ENCODE measurements at regions of chr15 and their contacts with region 1.

Region 1: DNA sequence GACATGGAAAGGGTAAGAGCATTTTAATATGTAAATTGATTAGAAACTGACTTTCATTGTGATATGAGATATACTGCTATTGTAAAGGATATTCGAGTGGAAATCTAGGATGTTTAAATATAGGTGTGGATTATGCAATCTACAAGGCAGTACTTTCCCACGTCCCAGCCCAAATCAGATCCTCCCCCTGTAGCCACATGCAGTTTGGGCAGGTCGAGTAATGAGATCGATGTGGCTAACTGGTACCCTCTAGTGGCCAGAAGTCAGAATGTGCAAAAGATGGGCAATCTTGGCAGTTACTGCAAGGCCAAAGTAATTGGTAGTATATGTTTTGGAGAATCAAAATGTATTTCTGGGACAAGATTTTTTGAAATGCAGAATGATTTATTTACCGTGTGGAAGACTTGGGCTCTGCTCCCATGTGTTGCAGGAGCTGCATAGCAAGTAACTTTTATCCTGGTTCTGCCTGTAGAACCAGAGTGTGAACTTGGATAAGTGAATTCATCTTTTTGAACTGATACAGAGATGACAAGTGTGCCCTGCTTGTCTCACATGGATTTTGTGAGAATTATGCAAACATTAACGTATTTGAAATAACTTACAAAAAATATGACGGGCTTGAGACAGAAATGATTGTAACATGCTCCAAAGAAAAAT is 94.5 kb upstream of the ADAMTSL3 start:
- DNase-seq: peak; percentile 61
- ATAC-seq: peak; percentile 92
- H3K4me3 ChIP-seq: no peak overlapping the region
- H3K27ac ChIP-seq: no peak overlapping the region
- H3K4me1 ChIP-seq: no peaks in the 10 kb centered on the region
- H3K27me3 ChIP-seq: no peaks in the 10 kb centered on the region; the same call in 1 of the 2 replicates
- CTCF ChIP-seq: peak; percentile 71
- POLR2A ChIP-seq: no peak
- RAD21 ChIP-seq: peak; percentile 81

Region 2: GRCh38 chr15:83282164-83282563 is 277.3 kb before region 1 on chr15:
- CTCF ChIA-PET with region 1: no interaction called
- POLR2A ChIA-PET with region 1: no interaction called
- dilution Hi-C with region 1: no loop called
- in situ Hi-C with region 1: no loop called
- intact Hi-C with region 1: no loop called
- DNase-seq: no peak
- ATAC-seq: no peak
- H3K4me3 ChIP-seq: no peak overlapping the region
- H3K27ac ChIP-seq: no peak overlapping the region
- H3K4me1 ChIP-seq: peaks cover 4% of the 10 kb centered on the region
- H3K27me3 ChIP-seq: peaks cover 44% of the 10 kb centered on the region
- CTCF ChIP-seq: no peak
- POLR2A ChIP-seq: no peak
- RAD21 ChIP-seq: no peak

Region 3: DNA sequence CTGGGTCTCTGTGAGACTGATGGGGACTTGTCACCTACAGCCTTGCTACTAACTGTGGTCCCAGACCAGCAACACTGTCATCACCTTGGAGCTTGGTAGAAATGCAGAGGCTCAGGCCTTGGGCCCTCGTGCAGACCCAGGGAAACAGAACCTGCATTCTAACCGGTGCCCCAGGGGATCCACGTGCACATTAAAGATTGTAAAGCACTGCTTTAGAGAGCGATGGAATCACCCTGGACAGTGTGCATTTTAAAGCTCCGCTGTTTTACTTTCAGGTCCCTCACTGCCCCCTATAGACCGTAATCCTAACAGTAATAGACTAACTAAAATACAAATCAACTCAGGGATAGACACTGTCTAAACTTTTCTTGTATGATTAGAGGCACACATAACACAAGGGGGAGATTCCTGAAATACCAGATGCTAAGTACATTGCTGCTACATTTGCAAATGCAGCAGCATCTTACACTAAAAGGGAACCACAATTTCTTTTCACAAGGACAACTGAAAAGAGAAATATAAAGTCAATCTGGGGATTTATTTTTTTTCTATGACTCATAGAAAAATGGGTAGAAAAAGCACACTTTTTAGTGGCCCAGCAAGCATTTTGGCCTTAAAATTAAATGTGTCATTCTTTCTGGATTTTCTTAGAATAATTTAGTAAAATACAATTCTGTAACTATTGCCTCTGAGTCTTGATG is 122.8 kb before region 1 on chr15:
- CTCF ChIA-PET with region 1: interaction called, 3 read pairs
- POLR2A ChIA-PET with region 1: no interaction called
- dilution Hi-C with region 1: no loop called
- in situ Hi-C with region 1: loop called (anchors 5 kb)
- intact Hi-C with region 1: loop called (anchors 1 kb)
- DNase-seq: peak; percentile 52
- ATAC-seq: peak; percentile 83
- H3K4me3 ChIP-seq: no peak overlapping the region
- H3K27ac ChIP-seq: no peak overlapping the region
- H3K4me1 ChIP-seq: no peaks in the 10 kb centered on the region
- H3K27me3 ChIP-seq: no peaks in the 10 kb centered on the region; the same call in 1 of the 2 replicates
- CTCF ChIP-seq: peak; percentile 58
- POLR2A ChIP-seq: no peak
- RAD21 ChIP-seq: peak; percentile 63

Region 4: GRCh38 chr15:83602021-83602420 is 42.6 kb after region 1 on chr15:
- CTCF ChIA-PET with region 1: no interaction called
- POLR2A ChIA-PET with region 1: no interaction called
- dilution Hi-C with region 1: no loop called
- in situ Hi-C with region 1: no loop called
- intact Hi-C with region 1: no loop called
- DNase-seq: no peak
- ATAC-seq: no peak
- H3K4me3 ChIP-seq: no peak overlapping the region
- H3K27ac ChIP-seq: no peak overlapping the region
- H3K4me1 ChIP-seq: no peaks in the 10 kb centered on the region; the same call in 1 of the 2 replicates
- H3K27me3 ChIP-seq: no peaks in the 10 kb centered on the region
- CTCF ChIP-seq: no peak
- POLR2A ChIP-seq: no peak
- RAD21 ChIP-seq: no peak

Region 5: GRCh38 chr15:83626171-83626802 is 66.8 kb after region 1 on chr15:
- CTCF ChIA-PET with region 1: no interaction called
- POLR2A ChIA-PET with region 1: no interaction called
- dilution Hi-C with region 1: no loop called
- in situ Hi-C with region 1: no loop called
- intact Hi-C with region 1: no loop called
- DNase-seq: no peak
- ATAC-seq: no peak
- H3K4me3 ChIP-seq: no peak overlapping the region
- H3K27ac ChIP-seq: no peak overlapping the region
- H3K4me1 ChIP-seq: no peaks in the 10 kb centered on the region
- H3K27me3 ChIP-seq: no peaks in the 10 kb centered on the region
- CTCF ChIP-seq: no peak
- POLR2A ChIP-seq: no peak
- RAD21 ChIP-seq: no peak